ENCODE measurements at regions of chr1 and their contacts with region 1.

Region 1: DNA sequence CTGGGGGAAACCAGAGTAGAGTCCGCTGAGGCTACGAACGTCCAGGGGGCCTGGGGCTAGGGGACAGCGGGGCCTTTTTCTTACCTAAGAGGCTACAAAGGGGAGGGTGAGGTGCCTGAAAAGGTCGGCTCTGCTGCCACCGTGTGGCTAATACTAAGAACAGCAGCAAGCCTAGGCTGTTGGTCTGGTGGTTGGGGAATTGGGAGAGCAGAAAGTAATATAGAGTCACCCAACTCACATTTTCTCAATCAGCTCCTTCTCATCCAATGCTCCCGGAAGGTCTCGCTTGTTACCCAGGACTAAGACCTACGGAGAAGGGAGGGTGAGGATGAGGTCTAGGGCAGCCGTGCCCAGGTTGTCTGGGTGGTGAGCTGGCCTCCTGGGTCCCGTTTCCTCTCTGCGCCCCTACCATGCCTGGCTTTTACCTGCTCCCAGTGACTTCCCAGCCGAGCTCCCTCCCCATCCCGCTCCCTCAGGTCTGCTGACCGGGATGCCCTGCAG is 9.3 kb downstream of the ARL8A start:
- DNase-seq: peak; percentile 73 to 93
- ATAC-seq: peak; percentile 87 to 92
- H3K4me3 ChIP-seq: no peak overlapping the region
- H3K27ac ChIP-seq: peak overlapping the region in 1 of 2 experiments; percentile 48; a peak in 2 of 6 replicates
- H3K4me1 ChIP-seq: 0 out of 3 replicates have a peak, but pooled peaks cover 2% of the 10 kb centered on the region
- CTCF ChIP-seq: peak; percentile 75
- EP300 ChIP-seq: no peak
- POLR2A ChIP-seq: no peak
- RAD21 ChIP-seq: peak; percentile 81 to 82

Region 2: GRCh38 chr1:201982623-201983379 is 152.5 kb before region 1 on chr1 and contains the start of gene RNPEP:
- CTCF ChIA-PET with region 1: interaction called, 1,624 read pairs
- POLR2A ChIA-PET with region 1: no interaction called
- DNase-seq: peak; percentile 82 to 88
- ATAC-seq: peak; percentile 91 to 93
- H3K4me3 ChIP-seq: peak within 1 kb of the TSS; percentile 60
- H3K27ac ChIP-seq: peak within 1 kb of the TSS; percentile 88 to 97
- H3K4me1 ChIP-seq: peaks cover 14% of the 10 kb centered on the region
- CTCF ChIP-seq: no peak; the same call in none of the 3 replicates
- EP300 ChIP-seq: no peak
- POLR2A ChIP-seq: peak; percentile 88
- RAD21 ChIP-seq: no peak
- polyA plus RNA-seq, gene RNPEP: 80.4 and 87.6 TPM in 2 replicates

Region 3: GRCh38 chr1:202069662-202070061 is 65.6 kb before region 1 on chr1:
- CTCF ChIA-PET with region 1: no interaction called
- POLR2A ChIA-PET with region 1: no interaction called
- DNase-seq: no peak
- ATAC-seq: no peak
- H3K4me3 ChIP-seq: no peak overlapping the region
- H3K27ac ChIP-seq: peak overlapping the region; percentile 3 to 72; a peak in 4 of 6 replicates
- H3K4me1 ChIP-seq: peaks cover 27% of the 10 kb centered on the region
- CTCF ChIP-seq: no peak
- EP300 ChIP-seq: no peak
- POLR2A ChIP-seq: no peak
- RAD21 ChIP-seq: no peak

Region 4: DNA sequence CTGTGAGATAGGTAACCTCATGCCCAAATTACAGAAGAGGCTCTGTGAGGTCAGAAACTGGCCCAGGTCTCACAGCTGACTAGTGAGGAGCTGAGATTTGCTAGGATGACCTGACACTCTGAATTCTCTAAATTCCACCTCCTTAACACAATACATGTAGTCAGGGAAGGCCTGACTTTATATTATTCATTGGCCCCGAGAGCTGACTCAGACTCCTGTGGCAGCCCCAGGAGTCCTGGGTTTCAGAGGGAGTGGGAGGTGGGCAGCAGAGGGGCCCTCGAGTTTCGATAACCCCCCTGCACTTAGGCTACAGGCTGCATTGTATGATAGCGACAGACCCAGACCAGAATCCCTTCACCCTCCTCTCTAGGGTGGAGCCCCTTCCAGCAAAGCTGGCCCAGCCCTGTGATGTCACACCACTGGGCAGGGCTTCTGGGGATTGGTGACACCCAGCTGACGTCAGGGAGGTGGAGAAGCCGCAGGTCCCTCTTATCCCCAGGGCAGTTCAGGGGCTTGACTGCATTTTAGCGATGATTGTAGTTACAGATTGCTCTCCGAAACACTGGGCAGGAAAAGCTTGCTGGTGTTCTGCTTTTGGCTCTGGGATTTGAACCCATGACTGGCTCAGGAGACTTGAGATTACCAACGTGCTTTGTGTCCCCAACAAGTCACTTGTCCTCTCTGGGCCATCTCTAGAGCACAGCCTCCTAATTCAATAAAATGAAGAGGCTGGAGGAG is 29.6 kb before region 1 on chr1:
- CTCF ChIA-PET with region 1: interaction called, 12 read pairs
- POLR2A ChIA-PET with region 1: no interaction called
- DNase-seq: peak; percentile 91 to 93
- ATAC-seq: peak; percentile 85 to 89
- H3K4me3 ChIP-seq: no peak overlapping the region
- H3K27ac ChIP-seq: peak overlapping the region; percentile 91 to 94
- H3K4me1 ChIP-seq: peaks cover 66% of the 10 kb centered on the region
- CTCF ChIP-seq: no peak
- EP300 ChIP-seq: no peak
- POLR2A ChIP-seq: no peak
- RAD21 ChIP-seq: 0 out of 5 replicates have a peak, but pooled peaks of 1 of the 2 experiments have one; percentile 11

Region 5: DNA sequence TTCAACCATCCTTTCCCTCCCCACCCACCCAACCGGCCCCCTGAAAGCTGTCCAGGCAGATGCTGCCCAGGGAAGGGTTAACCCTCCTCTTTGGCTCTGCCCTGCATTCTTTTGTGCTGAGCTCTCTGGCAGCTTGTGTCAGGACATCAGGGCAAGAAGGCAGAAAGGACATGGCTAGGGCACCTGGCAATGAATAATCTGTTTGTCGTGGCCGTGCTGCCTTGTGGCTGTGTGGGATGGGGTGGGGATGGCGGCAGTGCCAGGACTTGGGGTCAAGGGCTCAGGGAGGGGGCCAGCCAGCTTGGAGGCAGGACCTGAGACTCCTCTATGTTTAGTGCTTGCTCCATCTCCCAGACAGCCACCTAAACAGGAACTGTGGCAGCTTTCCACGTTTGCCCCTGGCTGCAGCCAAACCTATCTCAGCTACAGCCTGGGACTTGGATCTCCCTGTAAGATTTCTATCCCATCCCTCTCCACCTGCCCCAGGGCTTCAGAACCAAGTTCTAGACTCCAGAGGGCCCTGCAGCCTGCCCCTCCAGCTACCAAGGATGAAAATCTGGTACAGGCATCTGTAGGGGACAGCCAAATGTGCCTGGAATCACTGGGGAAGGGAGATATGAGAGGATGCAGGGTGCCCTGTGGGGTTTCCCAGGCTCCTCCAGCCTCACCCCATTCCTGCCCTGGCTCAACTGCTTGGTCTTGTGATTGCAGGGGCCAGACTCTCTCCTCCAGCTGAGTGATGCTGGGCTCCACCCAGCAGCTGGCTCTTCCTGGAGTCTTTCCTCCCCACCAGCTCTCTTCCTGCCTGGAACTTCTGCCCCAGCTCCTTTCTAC is 22.2 kb before region 1 on chr1:
- CTCF ChIA-PET with region 1: interaction called, 209 read pairs
- POLR2A ChIA-PET with region 1: interaction called, 4 read pairs
- DNase-seq: peak; percentile 62 to 85
- ATAC-seq: peak; percentile 76 to 80
- H3K4me3 ChIP-seq: no peak overlapping the region
- H3K27ac ChIP-seq: peak overlapping the region; percentile 88 to 94
- H3K4me1 ChIP-seq: peaks cover 73% of the 10 kb centered on the region
- CTCF ChIP-seq: no peak
- EP300 ChIP-seq: no peak; a peak in 1 of 5 replicates
- POLR2A ChIP-seq: no peak
- RAD21 ChIP-seq: peak; percentile 24 to 25; a peak in 3 of 5 replicates

Region 6: GRCh38 chr1:202122639-202123335 is 12.5 kb before region 1 on chr1 and contains the start of gene GPR37L1:
- CTCF ChIA-PET with region 1: interaction called, 209 read pairs
- POLR2A ChIA-PET with region 1: no interaction called
- DNase-seq: peak; percentile 64 to 75
- ATAC-seq: peak; percentile 76 to 85
- H3K4me3 ChIP-seq: no peak within 1 kb of the TSS
- H3K27ac ChIP-seq: peak within 1 kb of the TSS in 1 of 2 experiments; percentile 60; a peak in 3 of 6 replicates
- H3K4me1 ChIP-seq: peaks cover 20% of the 10 kb centered on the region
- CTCF ChIP-seq: peak; percentile 46
- EP300 ChIP-seq: no peak
- POLR2A ChIP-seq: no peak
- RAD21 ChIP-seq: peak; percentile 18 to 38; a peak in 1 of 5 replicates
- polyA plus RNA-seq, gene GPR37L1: 0.13 and 0.15 TPM in 2 replicates

Region 7: DNA sequence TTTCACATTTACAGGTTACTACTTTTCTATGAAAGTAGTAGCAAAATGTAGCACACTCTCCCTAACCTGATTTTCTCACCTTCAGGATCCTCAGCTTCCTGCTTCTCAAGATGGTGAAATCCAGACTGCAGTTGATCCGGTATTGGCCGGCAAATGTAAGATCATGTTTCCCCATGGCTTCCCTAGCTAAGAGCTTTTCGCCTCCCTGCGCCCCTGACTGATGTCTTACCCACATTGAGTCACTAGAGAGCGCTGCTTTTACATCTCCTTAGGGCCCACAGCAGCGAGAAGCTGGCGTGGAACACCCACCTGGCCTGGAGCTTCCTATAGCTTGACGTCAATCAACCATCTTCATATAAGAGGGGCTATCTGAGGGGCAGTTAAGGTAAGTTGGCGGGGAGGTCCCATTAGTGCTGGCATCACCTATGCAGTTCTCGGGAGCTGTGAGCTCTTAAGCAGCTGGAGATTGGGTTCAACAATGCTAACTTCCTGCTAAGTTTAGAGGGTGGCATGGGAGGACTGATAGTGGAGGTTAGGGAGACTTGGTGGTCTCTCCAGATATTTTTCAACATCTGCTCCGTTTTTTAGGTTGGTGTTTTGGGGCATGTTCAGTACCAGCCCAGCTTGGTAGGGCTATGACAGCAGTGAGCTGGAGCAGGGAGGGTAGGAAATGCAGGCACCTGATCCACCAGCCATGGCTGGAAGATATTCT is 19.7 kb after region 1 on chr1:
- CTCF ChIA-PET with region 1: interaction called, 30 read pairs
- POLR2A ChIA-PET with region 1: no interaction called
- DNase-seq: peak; percentile 46 to 80
- ATAC-seq: peak; percentile 57 to 79
- H3K4me3 ChIP-seq: no peak overlapping the region
- H3K27ac ChIP-seq: peak overlapping the region; percentile 19 to 74; a peak in 5 of 6 replicates
- H3K4me1 ChIP-seq: peaks cover 21% of the 10 kb centered on the region
- CTCF ChIP-seq: peak; percentile 44
- EP300 ChIP-seq: no peak
- POLR2A ChIP-seq: no peak
- RAD21 ChIP-seq: peak in 1 of 2 experiments; percentile 41; a peak in 2 of 5 replicates

Region 8: GRCh38 chr1:202160377-202160940 is 25.2 kb after region 1 on chr1 and contains the start of gene PTPN7:
- CTCF ChIA-PET with region 1: interaction called, 10 read pairs
- POLR2A ChIA-PET with region 1: no interaction called
- DNase-seq: no peak
- ATAC-seq: no peak; a peak in 2 of 6 replicates
- H3K4me3 ChIP-seq: no peak within 1 kb of the TSS
- H3K27ac ChIP-seq: peak within 1 kb of the TSS in 1 of 2 experiments; percentile 19; a peak in 1 of 6 replicates
- H3K4me1 ChIP-seq: peaks cover 16% of the 10 kb centered on the region
- CTCF ChIP-seq: no peak
- EP300 ChIP-seq: no peak
- POLR2A ChIP-seq: no peak
- RAD21 ChIP-seq: no peak
- polyA plus RNA-seq, gene PTPN7: 0.08 TPM in 1 of 2 replicates, not detected in the other

Region 9: DNA sequence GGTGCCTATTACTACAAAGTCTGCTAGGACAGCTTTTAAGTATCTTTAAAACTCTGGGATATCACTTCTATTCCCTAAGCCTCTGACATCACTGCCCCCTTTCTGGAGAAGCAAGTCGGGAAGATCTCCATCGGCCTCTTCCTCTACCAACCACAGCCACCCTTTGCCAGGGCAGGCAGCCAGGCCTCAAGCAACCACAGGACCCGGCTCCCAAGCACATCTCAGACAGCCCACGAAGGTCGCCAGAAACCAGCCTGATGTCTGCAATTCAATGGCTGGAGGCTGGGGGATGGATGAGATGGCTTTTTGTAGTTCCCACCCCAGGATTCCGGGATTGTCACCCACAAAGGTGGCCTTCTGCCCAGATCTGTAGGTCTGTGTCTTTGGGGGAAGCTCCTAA is 129.0 kb after region 1 on chr1:
- CTCF ChIA-PET with region 1: no interaction called
- POLR2A ChIA-PET with region 1: no interaction called
- DNase-seq: no peak
- ATAC-seq: no peak
- H3K4me3 ChIP-seq: no peak overlapping the region
- H3K27ac ChIP-seq: no peak overlapping the region
- H3K4me1 ChIP-seq: no peaks in the 10 kb centered on the region
- CTCF ChIP-seq: no peak
- EP300 ChIP-seq: no peak
- POLR2A ChIP-seq: no peak
- RAD21 ChIP-seq: no peak

Measured in A549 (cell line).